A549 (cell line): ENCODE measurements at regions of chr13 and their contacts with region 1.

Region 1: DNA sequence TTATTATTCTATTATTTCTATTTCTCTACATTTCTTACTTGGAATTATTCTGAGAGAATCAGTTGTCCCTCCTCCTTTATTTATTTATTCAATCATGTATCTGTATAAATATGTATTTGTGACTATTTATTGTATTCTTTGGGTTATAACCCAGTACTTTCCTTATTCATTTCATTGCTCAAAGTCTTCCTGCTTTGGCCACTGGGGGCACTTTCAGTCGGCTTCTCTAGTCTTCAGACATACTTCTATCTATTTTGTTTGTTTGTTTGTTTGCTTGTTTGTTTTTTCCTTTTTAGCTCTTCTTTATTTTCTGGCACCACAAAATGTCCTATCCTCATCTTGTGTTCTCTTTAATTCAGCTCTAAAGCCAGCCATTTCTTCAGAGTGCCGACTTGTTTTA is 260.4 kb downstream of the NALCN start:
- DNase-seq: peak in 1 of 2 experiments; percentile 2
- ATAC-seq: 0 out of 6 replicates have a peak, but pooled peaks of 1 of the 2 experiments have one; percentile 48
- H3K4me3 ChIP-seq: no peak overlapping the region
- H3K27ac ChIP-seq: no peak overlapping the region
- H3K4me1 ChIP-seq: no peaks in the 10 kb centered on the region
- CTCF ChIP-seq: peak; percentile 34; the same call in 2 of the 3 replicates
- EP300 ChIP-seq: no peak
- POLR2A ChIP-seq: no peak
- RAD21 ChIP-seq: peak; percentile 9 to 37; a peak in 2 of 5 replicates

Region 2: GRCh38 chr13:101049166-101049850 is 106.6 kb before region 1 on chr13:
- CTCF ChIA-PET with region 1: no interaction called
- POLR2A ChIA-PET with region 1: no interaction called
- DNase-seq: no peak
- ATAC-seq: no peak
- H3K4me3 ChIP-seq: no peak overlapping the region
- H3K27ac ChIP-seq: no peak overlapping the region
- H3K4me1 ChIP-seq: no peaks in the 10 kb centered on the region
- CTCF ChIP-seq: no peak
- EP300 ChIP-seq: no peak
- POLR2A ChIP-seq: no peak
- RAD21 ChIP-seq: no peak

Region 3: DNA sequence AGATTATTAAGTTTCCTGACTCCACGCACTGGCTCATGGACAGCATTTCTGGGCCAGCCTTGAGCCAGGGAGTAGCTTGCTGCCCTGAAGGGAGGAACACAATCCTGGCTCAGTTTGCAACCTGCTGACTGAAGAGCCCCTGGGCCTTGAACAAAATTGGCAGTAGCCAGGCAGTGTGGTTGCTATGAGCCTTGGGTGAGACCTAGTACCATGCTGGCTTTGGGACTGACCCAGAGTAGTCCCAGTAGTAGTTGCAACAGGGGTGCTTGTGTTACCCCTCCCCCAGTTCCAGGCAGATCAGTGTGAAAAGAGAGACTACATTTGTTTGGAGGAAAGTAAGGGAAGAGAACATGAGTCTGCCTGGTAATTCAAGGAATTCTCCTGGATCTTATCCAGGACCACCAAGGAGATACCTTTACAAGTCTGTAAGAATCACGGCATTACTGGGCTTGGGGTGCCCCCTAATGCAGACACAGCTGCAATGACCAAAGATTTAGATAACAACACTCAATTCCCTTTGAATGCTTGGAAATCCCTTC is 318.6 kb after region 1 on chr13:
- CTCF ChIA-PET with region 1: interaction called, 27 read pairs
- POLR2A ChIA-PET with region 1: no interaction called
- DNase-seq: peak in 1 of 2 experiments; percentile 58
- ATAC-seq: peak; percentile 43 to 86
- H3K4me3 ChIP-seq: no peak overlapping the region
- H3K27ac ChIP-seq: peak overlapping the region; percentile 7 to 83; a peak in 4 of 6 replicates
- H3K4me1 ChIP-seq: peaks cover 14% of the 10 kb centered on the region
- CTCF ChIP-seq: peak; percentile 68
- EP300 ChIP-seq: no peak
- POLR2A ChIP-seq: no peak
- RAD21 ChIP-seq: peak; percentile 89 to 95